Heart right ventricle (tissue), 16 donors: ENCODE measurements at regions of chr1 and their contacts with region 1.

Region 1: GRCh38 chr1:186999506-186999905 is 170.8 kb downstream of the PLA2G4A start:
- DNase-seq: no peak
- ATAC-seq: no peak
- H3K4me3 ChIP-seq: no peak overlapping the region
- H3K27ac ChIP-seq: no peak overlapping the region
- H3K4me1 ChIP-seq: peaks cover 0 to 4% (median 0%) of the 10 kb centered on the region in 9 donors
- H3K27me3 ChIP-seq: no peaks in the 10 kb centered on the region
- CTCF ChIP-seq: no peak

Region 2: GRCh38 chr1:186974774-186975181 is 24.7 kb before region 1 on chr1:
- intact Hi-C with region 1: loop called in 1 of 10 experiments (anchors 1 kb)
- DNase-seq: no peak
- ATAC-seq: peak in 3 of 8 donors; percentile 33 to 52 (median 52)
- H3K4me3 ChIP-seq: no peak overlapping the region
- H3K27ac ChIP-seq: no peak overlapping the region
- H3K4me1 ChIP-seq: peaks cover 0 to 12% (median 0%) of the 10 kb centered on the region in 9 donors
- H3K27me3 ChIP-seq: no peaks in the 10 kb centered on the region
- CTCF ChIP-seq: no peak